ENCODE measurements at regions of chr1 and their contacts with region 1.

Region 1: DNA sequence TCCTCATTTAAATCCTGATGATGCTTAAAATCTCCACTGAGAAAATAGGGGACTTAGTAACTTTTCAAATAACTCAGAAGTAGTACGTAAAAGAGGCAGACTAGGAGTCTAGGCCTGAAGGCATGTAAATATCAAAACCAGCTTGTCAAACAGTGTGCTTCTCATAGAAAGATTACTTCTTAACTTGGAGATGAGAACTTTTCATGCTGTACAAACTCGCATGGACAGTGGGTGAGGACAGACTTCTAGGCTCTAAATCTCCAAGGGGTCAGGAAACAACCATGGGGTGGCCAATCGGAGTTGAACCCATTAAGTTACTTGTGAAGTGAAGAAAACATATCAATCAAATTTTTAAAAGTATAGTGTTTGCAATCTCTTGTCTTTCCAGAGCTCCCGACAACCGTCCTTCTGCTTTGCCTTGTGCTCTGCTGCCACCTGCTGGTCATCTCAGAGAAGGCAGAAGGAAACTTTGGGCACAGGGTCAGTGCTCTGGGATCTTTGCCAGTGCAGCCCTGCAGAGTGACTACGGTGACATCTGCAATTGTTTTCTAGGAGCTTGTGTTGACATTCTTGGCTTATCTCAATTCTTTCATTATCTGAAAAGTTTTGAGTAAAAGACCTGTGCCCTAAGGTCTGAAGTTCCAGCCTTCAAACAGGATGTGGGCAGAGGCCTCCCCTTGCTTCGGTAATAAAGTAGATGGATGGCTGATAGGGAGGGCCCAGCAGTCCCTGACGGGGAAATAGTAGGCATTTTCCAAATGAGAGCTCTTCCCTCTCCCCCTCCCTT is 105.1 kb upstream of the PDE4B start:
- DNase-seq: peak; percentile 84 to 89
- H3K4me3 ChIP-seq: no peak overlapping the region
- H3K4me3 Mint-ChIP-seq: no peak overlapping the region
- H3K27ac Mint-ChIP-seq: no peak overlapping the region
- H3K4me1 ChIP-seq: peaks cover 17% of the 10 kb centered on the region
- H3K4me1 Mint-ChIP-seq: no peaks in the 10 kb centered on the region
- H3K27me3 ChIP-seq: no peaks in the 10 kb centered on the region
- H3K27me3 Mint-ChIP-seq: no peaks in the 10 kb centered on the region
- CTCF ChIP-seq: peak; percentile 68 to 79

Region 2: GRCh38 chr1:65059930-65060538 is 627.6 kb before region 1 on chr1:
- CTCF ChIA-PET with region 1: interaction called, 3 read pairs
- POLR2A ChIA-PET with region 1: no interaction called
- intact Hi-C with region 1: loop called (anchors 1 kb)
- DNase-seq: no peak
- H3K4me3 ChIP-seq: no peak overlapping the region
- H3K4me3 Mint-ChIP-seq: no peak overlapping the region
- H3K27ac Mint-ChIP-seq: no peak overlapping the region
- H3K4me1 ChIP-seq: no peaks in the 10 kb centered on the region
- H3K4me1 Mint-ChIP-seq: no peaks in the 10 kb centered on the region
- H3K27me3 ChIP-seq: no peaks in the 10 kb centered on the region
- H3K27me3 Mint-ChIP-seq: no peaks in the 10 kb centered on the region
- CTCF ChIP-seq: peak; percentile 22 to 24

Region 3: GRCh38 chr1:65170511-65171142 is 517.0 kb before region 1 on chr1:
- CTCF ChIA-PET with region 1: no interaction called
- POLR2A ChIA-PET with region 1: interaction called, 15 read pairs
- intact Hi-C with region 1: no loop called
- DNase-seq: peak in 1 of 2 experiments; percentile 17
- H3K4me3 ChIP-seq: no peak overlapping the region
- H3K4me3 Mint-ChIP-seq: no peak overlapping the region
- H3K27ac Mint-ChIP-seq: peak overlapping the region; percentile 48
- H3K4me1 ChIP-seq: peaks cover 19% of the 10 kb centered on the region
- H3K4me1 Mint-ChIP-seq: peaks cover 20% of the 10 kb centered on the region
- H3K27me3 ChIP-seq: no peaks in the 10 kb centered on the region
- H3K27me3 Mint-ChIP-seq: no peaks in the 10 kb centered on the region
- CTCF ChIP-seq: no peak

Region 4: DNA sequence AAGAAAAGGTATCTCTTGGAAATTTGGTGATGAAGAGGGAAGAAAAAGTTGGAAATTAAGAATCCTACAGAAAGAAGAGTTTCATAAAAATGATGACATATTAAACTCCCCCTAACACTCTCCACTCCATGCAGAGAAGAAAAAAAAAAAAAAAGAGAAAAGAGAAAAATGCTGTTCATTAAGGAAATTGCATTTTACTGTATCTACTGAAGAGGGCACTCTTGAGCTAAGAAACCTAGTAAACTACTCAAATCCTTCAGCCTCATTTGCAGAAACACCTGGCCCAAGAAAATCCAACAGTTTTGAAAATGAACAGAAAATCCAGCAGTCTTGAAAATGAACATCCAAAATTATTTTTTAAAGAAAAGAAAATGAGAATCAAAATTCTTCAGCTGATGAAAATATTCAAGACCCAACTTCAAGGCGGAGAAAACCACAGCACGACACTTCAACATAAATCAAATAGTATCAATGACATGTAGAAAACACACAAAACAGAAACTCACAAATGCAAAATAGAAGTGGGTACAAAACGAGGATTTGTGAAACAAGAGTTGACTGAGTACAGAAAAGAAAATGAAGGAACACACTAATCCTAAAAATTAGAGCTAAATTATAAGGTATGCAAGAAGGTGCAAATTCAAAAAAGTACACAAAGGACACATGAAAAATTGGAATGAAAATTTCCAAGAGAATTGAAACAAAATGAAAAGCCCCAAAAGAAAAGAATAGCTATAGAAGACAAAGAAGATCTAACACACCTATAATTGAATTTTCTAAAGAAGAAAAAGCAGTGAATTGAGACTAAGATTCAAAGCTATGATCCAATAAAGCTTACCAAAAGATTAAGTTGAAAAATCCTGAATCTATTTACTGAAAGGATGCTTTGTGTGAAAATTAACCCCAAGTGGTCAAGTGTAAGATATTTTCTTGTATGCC is 451.5 kb before region 1 on chr1:
- CTCF ChIA-PET with region 1: interaction called, 8 read pairs
- POLR2A ChIA-PET with region 1: no interaction called
- intact Hi-C with region 1: loop called (anchors 1 kb)
- DNase-seq: no peak
- H3K4me3 ChIP-seq: no peak overlapping the region
- H3K4me3 Mint-ChIP-seq: no peak overlapping the region
- H3K27ac Mint-ChIP-seq: no peak overlapping the region
- H3K4me1 ChIP-seq: no peaks in the 10 kb centered on the region
- H3K4me1 Mint-ChIP-seq: no peaks in the 10 kb centered on the region
- H3K27me3 ChIP-seq: no peaks in the 10 kb centered on the region
- H3K27me3 Mint-ChIP-seq: no peaks in the 10 kb centered on the region
- CTCF ChIP-seq: peak in 1 of 2 experiments; percentile 39

Region 5: GRCh38 chr1:65431111-65431705 is 256.4 kb before region 1 on chr1:
- CTCF ChIA-PET with region 1: interaction called, 12 read pairs
- POLR2A ChIA-PET with region 1: no interaction called
- intact Hi-C with region 1: loop called (anchors 1 kb)
- DNase-seq: peak in 1 of 2 experiments; percentile 25
- H3K4me3 ChIP-seq: no peak overlapping the region
- H3K4me3 Mint-ChIP-seq: no peak overlapping the region
- H3K27ac Mint-ChIP-seq: no peak overlapping the region
- H3K4me1 ChIP-seq: no peaks in the 10 kb centered on the region
- H3K4me1 Mint-ChIP-seq: peaks cover 10% of the 10 kb centered on the region
- H3K27me3 ChIP-seq: no peaks in the 10 kb centered on the region
- H3K27me3 Mint-ChIP-seq: no peaks in the 10 kb centered on the region
- CTCF ChIP-seq: peak; percentile 37 to 45